Activated CD4-positive, alpha-beta T cell treated with anti-CD3 and anti-CD28 coated beads, Interleukin-2, amount 10 ng/mL, durations not matched to agents 24 days and 14 days (primary cell): ENCODE measurements at regions of chr1 and their contacts with region 1.

Region 1: DNA sequence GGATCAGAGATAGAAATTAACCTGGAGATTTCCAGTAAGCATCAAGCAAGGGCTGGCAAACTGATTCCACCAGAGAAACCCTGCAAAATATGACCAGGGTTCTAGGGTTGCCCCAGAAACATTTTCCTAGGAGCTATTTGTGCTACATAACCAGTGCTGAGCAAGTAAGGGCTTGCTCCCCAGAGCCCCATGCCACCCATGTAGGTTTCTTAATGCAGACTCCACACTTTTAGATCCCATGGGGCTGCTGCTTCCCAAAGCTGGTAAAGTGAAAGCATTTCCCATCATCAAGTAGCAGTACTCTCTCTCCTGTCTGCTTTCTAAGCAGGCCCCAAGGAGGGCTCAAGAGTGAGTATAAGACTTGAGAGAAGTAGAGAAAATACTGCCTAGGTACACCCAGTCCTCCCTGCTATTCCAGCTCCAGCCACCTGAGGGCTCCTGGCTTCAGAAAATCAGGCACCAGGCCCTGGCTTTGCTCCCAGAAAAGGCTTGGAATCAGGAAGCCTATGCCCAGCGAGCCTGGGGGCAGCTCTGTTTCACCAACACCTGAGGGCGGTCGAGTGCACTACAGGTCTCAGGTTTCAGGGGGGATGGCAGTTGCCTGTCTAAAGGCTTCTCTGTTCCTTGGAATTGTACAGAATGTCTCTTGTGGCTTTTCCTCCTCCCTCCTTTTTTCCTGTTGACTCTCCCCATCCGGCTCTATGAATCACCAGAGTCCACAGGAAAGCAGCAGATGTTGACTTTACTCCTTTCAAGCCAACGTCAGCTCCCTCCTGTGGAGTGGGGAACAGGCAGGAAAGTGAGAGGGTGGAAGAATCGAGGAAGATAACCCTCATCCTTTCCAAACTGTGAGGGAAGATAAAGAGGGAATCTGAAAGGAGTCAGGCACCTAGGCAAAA is 6.2 kb upstream of the ANKRD35 start:
- DNase-seq: peak; percentile 87
- H3K4me3 Mint-ChIP-seq: no peak overlapping the region
- H3K27ac Mint-ChIP-seq: no peak overlapping the region
- H3K4me1 Mint-ChIP-seq: peaks cover 4% of the 10 kb centered on the region
- H3K27me3 Mint-ChIP-seq: peaks cover 5% of the 10 kb centered on the region

Region 2: DNA sequence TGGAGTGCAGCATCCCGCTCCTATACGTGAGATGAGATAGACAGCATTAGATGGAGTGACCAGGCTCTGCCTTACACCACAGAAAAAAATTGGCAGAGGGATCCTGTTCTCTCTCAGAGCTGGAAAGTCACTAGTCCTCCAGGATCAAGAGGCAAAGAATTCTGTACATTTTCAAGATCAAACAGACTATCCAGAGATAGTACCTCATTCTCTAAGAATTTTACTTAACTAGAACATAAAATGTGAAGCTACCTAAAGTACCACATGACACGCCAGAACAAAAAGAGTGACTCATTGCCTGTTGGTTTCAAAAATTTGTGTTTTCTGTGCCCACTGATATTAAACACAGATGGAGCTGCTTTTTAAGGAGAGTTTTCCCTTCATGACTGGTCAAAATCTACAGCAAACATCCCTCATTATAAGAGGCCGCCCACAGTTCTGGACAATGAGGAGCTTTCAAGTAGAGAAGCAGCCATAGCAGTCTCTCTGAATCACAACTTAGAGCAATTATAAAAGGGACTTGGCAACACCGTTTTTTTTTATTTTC is 140.3 kb before region 1 on chr1:
- intact Hi-C with region 1: no loop called
- DNase-seq: no peak
- H3K4me3 Mint-ChIP-seq: no peak overlapping the region
- H3K27ac Mint-ChIP-seq: no peak overlapping the region
- H3K4me1 Mint-ChIP-seq: peaks cover 8% of the 10 kb centered on the region
- H3K27me3 Mint-ChIP-seq: no peaks in the 10 kb centered on the region

Region 3: DNA sequence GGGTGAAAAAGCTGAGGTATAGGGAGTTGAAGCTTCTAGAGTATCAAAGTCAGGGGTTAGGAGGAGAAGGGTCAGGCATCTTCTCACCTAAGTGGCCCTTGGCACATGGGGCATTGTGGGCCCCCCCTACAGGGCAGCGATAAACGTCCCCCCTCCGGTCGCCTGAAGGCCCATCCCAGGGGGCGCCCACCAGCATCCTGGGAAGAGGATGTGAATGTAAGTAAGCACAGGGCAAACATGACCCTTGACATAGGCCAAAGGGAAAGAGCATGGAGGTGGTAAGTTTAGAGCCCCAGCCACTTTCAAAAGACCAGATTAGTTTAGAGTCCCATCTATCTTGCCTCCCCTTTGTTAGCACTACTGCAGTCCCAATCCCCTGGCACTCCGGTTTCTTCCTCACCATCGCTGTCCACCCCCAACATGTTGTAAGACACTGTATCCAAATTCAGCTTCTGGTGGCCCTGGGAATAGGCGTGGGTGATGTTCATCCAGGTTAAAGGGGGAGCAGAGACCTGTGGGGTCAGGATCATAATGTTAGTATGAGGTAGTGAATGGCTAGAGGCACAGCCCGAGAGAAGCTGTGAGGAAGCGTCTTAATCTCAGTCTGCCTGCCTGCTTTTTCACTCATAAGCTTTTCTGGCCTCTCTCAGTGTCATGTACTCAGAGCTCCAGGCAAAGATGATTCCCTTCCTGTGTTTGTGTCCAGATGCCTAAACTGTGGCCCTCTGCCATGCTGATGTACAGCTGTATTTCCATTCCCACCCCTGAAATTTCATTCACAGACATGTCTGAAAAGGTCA is 15.3 kb after region 1 on chr1:
- intact Hi-C with region 1: loop called (anchors 2 kb)
- DNase-seq: no peak
- H3K4me3 Mint-ChIP-seq: no peak overlapping the region
- H3K27ac Mint-ChIP-seq: no peak overlapping the region
- H3K4me1 Mint-ChIP-seq: peaks cover 8% of the 10 kb centered on the region
- H3K27me3 Mint-ChIP-seq: no peaks in the 10 kb centered on the region

Region 4: GRCh38 chr1:146012737-146013403 is 121.0 kb after region 1 on chr1:
- intact Hi-C with region 1: loop called (anchors 2 kb)
- DNase-seq: peak; percentile 90
- H3K4me3 Mint-ChIP-seq: no peak overlapping the region
- H3K27ac Mint-ChIP-seq: peak overlapping the region; percentile 28
- H3K4me1 Mint-ChIP-seq: peaks cover 12% of the 10 kb centered on the region
- H3K27me3 Mint-ChIP-seq: peaks cover 26% of the 10 kb centered on the region